Activated naive CD4-positive, alpha-beta T cell treated with anti-CD3 and anti-CD28 coated beads, Interleukin-2, amount 10 ng/mL, durations not matched to agents 7 days and 5 days (primary cell): ENCODE measurements at regions of chr19 and their contacts with region 1.

Region 1: DNA sequence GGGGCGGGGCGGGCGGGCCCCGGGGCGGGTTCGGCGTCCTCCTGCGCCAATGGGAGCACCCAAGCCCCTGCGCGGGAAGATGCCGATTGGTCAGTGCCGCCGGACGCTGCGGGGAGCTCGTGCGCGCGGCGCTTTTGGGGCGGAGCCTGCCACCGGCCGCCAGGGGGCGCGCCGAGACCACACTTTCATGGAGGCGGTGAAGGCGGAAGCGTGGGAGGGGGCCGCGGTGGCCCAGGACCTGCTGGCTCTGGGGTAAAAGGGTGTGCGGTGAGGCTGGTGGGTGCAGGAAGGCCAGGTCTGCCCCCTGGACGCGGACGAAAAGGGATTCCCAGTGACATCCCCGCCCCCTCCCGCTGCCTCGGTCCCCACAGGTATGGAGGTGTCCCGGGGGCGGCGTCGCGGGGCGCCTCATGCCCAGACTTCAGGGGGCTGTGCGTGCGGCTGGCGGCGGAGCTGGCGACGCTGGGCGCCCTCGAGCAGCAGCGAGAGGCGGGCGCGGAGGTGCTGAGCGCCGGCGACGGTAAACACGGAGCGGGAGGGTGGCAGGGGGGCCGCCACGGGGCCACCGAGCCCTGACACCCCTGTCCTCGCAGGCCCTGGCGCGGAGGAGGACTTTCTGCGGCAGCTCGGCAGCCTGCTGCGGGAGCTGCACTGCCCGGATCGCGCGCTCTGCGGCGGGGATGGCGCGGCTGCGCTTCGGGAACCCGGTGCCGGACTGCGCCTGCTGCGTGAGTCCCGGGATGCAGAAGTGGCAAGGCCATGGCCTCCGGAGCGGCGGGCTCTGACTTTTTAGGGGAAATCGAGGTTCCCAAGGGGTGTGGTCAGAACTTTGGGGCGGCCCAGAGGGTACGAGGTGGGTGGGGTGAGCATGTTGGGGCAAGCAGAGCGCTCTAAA is at the start of gene FAM98C:
- DNase-seq: peak; percentile 97
- H3K4me3 Mint-ChIP-seq: peak within 1 kb of the TSS; percentile 92
- H3K27ac Mint-ChIP-seq: peak within 1 kb of the TSS; percentile 94
- H3K4me1 Mint-ChIP-seq: peaks cover 28% of the 10 kb centered on the region
- H3K27me3 Mint-ChIP-seq: peaks cover 19% of the 10 kb centered on the region

Region 2: GRCh38 chr19:38233740-38234251 is 169.4 kb before region 1 on chr19:
- CTCF ChIA-PET with region 1: interaction called, 10 read pairs
- DNase-seq: peak; percentile 87
- H3K4me3 Mint-ChIP-seq: no peak overlapping the region
- H3K27ac Mint-ChIP-seq: no peak overlapping the region
- H3K4me1 Mint-ChIP-seq: peaks cover 6% of the 10 kb centered on the region
- H3K27me3 Mint-ChIP-seq: peaks cover 64% of the 10 kb centered on the region

Region 3: GRCh38 chr19:38333245-38333644 is 70.0 kb before region 1 on chr19:
- CTCF ChIA-PET with region 1: no interaction called
- DNase-seq: no peak
- H3K4me3 Mint-ChIP-seq: no peak overlapping the region
- H3K27ac Mint-ChIP-seq: no peak overlapping the region
- H3K4me1 Mint-ChIP-seq: peaks cover 8% of the 10 kb centered on the region
- H3K27me3 Mint-ChIP-seq: no peaks in the 10 kb centered on the region

Region 4: GRCh38 chr19:38514812-38515633 is 111.8 kb after region 1 on chr19:
- CTCF ChIA-PET with region 1: interaction called, 17 read pairs
- DNase-seq: peak; percentile 81
- H3K4me3 Mint-ChIP-seq: no peak overlapping the region
- H3K27ac Mint-ChIP-seq: peak overlapping the region; percentile 69
- H3K4me1 Mint-ChIP-seq: peaks cover 34% of the 10 kb centered on the region
- H3K27me3 Mint-ChIP-seq: peaks cover 33% of the 10 kb centered on the region

Region 5: GRCh38 chr19:38634757-38635482 is 231.7 kb after region 1 on chr19:
- CTCF ChIA-PET with region 1: interaction called, 42 read pairs
- DNase-seq: peak; percentile 83
- H3K4me3 Mint-ChIP-seq: no peak overlapping the region
- H3K27ac Mint-ChIP-seq: peak overlapping the region; percentile 74
- H3K4me1 Mint-ChIP-seq: peaks cover 45% of the 10 kb centered on the region
- H3K27me3 Mint-ChIP-seq: no peaks in the 10 kb centered on the region

Region 6: DNA sequence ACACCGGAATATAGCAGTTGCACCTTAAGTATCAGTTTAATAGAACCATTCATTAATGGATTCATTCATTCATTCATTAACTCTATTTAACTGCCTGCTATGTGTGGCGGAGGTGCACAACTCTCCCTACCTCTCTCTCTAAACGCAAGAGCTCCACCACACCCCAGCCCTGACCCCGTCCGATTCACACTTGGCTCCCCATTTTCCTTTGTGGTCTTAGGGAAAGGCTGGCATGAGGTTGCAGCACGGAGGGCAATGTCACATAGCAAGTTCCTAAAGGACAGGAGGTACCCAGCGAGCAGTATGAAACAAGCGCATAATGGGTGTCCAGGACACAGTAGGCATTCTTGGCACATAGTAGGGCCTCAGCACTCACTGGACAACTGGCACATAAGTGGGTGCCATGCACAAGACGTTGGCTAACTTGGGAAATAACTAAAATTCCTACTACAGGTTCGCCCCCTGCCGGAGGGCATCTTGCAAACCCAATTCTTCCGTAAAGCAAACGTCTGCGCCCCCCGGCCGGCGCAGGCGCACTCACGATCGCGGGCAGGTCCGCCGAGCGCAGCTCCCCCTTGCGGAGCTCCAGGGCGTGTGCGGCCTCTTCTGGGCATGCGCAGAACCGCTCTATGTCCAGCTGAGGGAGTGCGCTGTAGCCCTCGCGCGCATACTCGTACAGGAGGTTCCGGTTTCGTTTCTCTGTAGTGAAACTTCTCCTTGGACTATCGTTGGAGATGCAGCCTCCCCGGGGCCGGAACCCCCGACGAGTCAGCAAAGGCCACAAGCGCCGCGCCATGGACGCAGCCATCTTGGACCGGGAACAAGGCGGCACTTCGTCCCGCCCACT is 526.9 kb after region 1 on chr19 and contains the start of gene SARS2:
- CTCF ChIA-PET with region 1: interaction called, 26 read pairs
- DNase-seq: peak; percentile 93
- H3K4me3 Mint-ChIP-seq: peak within 1 kb of the TSS; percentile 98
- H3K27ac Mint-ChIP-seq: peak within 1 kb of the TSS; percentile 99
- H3K4me1 Mint-ChIP-seq: peaks cover 50% of the 10 kb centered on the region
- H3K27me3 Mint-ChIP-seq: no peaks in the 10 kb centered on the region